ENCODE measurements at regions of chr1 and their contacts with region 1.

Region 1: GRCh38 chr1:209248649-209249279 is 334.8 kb upstream of the CAMK1G start:
- DNase-seq: peak in 4 of 5 donors; percentile 22 to 32 (median 27)
- H3K4me3 ChIP-seq: no peak overlapping the region
- H3K4me3 Mint-ChIP-seq: no peak overlapping the region
- H3K27ac ChIP-seq: no peak overlapping the region
- H3K27ac Mint-ChIP-seq: no peak overlapping the region
- H3K4me1 ChIP-seq: no peaks in the 10 kb centered on the region
- H3K4me1 Mint-ChIP-seq: peaks cover 0 to 2% (median 0%) of the 10 kb centered on the region in 4 donors
- H3K27me3 ChIP-seq: no peaks in the 10 kb centered on the region
- H3K27me3 Mint-ChIP-seq: peaks cover 2 to 3% of the 10 kb centered on the region in 2 donors

Region 2: DNA sequence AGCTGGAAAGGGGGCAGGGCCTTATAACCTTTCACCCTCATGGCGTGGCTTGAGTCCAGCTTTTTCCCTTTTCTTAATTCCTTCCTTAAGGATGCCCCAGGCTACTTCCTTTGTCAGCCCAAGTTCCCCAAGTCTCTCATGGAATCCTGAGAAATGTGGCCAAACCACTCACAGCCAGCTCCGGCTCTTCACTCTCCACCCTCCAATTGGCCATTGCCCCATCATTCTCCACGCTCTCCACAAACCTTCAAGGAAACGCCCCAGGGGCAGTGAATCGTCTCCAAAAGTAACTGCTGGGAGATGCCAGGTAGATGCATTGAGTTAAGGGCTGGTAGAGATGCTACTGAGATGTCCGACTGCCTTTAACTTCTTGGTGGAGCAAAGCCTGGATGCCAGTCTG is 1224.4 kb before region 1 on chr1:
- CTCF ChIA-PET with region 1: interaction called, 5 read pairs
- POLR2A ChIA-PET with region 1: no interaction called
- intact Hi-C with region 1: loop called (anchors 5 kb)
- DNase-seq: no peak
- H3K4me3 ChIP-seq: no peak overlapping the region
- H3K4me3 Mint-ChIP-seq: no peak overlapping the region
- H3K27ac ChIP-seq: no peak overlapping the region
- H3K27ac Mint-ChIP-seq: no peak overlapping the region
- H3K4me1 ChIP-seq: no peaks in the 10 kb centered on the region
- H3K4me1 Mint-ChIP-seq: no peaks in the 10 kb centered on the region
- H3K27me3 ChIP-seq: no peaks in the 10 kb centered on the region
- H3K27me3 Mint-ChIP-seq: peaks cover 0 to 7% of the 10 kb centered on the region in 2 donors

Region 3: DNA sequence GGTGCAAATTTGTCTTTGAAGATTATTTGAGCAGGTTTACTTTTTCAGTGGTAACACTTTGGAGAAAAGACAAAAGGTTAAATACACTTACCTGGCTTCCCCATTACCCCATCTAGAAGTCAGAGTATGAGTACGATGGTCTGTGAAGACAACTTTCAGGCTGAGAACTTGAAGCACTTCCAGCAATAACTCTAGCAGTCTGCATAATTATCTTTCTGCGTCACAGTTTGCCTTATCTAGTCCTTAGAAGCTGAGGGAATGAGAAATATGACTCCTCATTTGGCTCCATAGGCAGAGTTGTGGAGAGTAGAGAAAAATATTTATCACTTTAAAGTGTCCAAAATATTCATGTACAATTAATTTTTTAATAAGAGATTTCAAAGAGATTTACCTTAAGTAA is 11.4 kb after region 1 on chr1:
- CTCF ChIA-PET with region 1: interaction called, 36 read pairs
- POLR2A ChIA-PET with region 1: no interaction called
- intact Hi-C with region 1: no loop called
- DNase-seq: no peak
- H3K4me3 ChIP-seq: no peak overlapping the region
- H3K4me3 Mint-ChIP-seq: no peak overlapping the region
- H3K27ac ChIP-seq: no peak overlapping the region
- H3K27ac Mint-ChIP-seq: no peak overlapping the region
- H3K4me1 ChIP-seq: no peaks in the 10 kb centered on the region
- H3K4me1 Mint-ChIP-seq: no peaks in the 10 kb centered on the region
- H3K27me3 ChIP-seq: no peaks in the 10 kb centered on the region
- H3K27me3 Mint-ChIP-seq: peaks cover 0 to 2% of the 10 kb centered on the region in 2 donors

Region 4: DNA sequence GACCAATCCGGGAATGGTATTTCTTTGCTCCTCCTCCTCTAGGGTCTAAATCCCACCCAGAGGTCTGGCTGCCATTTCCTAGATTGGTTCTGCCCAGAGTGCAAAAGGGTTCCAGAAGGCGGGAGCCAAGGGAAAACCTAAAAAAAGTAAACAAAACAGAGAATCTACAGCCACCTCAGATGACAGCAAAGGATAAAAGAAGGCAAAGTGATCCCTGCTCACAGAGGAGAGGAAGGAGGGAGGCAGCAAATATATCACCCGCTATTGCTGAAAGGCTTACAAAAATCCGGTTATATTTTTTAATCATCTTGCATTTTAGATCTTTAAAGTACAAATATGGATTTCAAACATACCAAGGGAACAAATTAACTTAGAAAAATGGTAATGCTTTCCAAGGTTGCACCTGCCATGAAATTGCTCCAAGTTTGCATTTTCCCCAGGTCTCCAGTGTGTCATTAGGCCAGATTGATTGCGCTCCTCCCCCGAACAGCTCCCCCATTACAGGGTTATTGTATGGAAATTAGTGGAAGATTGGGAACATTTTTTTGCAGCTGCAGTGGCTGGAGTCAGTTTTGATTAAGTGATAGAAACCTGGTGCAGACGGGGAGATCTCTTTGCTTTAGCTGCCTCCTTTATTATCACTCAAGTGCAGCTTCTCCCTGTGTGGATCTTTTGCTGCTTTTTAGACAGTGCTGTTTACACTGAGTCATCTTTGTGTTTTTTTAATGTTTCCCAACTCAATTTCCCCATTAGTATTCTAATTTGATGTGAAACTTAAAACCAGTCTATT is 54.2 kb after region 1 on chr1:
- CTCF ChIA-PET with region 1: no interaction called
- POLR2A ChIA-PET with region 1: no interaction called
- intact Hi-C with region 1: no loop called
- DNase-seq: no peak
- H3K4me3 ChIP-seq: no peak overlapping the region
- H3K4me3 Mint-ChIP-seq: no peak overlapping the region
- H3K27ac ChIP-seq: no peak overlapping the region
- H3K27ac Mint-ChIP-seq: no peak overlapping the region
- H3K4me1 ChIP-seq: no peaks in the 10 kb centered on the region
- H3K4me1 Mint-ChIP-seq: no peaks in the 10 kb centered on the region
- H3K27me3 ChIP-seq: no peaks in the 10 kb centered on the region
- H3K27me3 Mint-ChIP-seq: peaks cover 5 to 12% of the 10 kb centered on the region in 2 donors

Measured in CD4-positive, alpha-beta memory T cell (primary cell).